ENCODE measurements at regions of chr9 and their contacts with region 1.

Region 1: DNA sequence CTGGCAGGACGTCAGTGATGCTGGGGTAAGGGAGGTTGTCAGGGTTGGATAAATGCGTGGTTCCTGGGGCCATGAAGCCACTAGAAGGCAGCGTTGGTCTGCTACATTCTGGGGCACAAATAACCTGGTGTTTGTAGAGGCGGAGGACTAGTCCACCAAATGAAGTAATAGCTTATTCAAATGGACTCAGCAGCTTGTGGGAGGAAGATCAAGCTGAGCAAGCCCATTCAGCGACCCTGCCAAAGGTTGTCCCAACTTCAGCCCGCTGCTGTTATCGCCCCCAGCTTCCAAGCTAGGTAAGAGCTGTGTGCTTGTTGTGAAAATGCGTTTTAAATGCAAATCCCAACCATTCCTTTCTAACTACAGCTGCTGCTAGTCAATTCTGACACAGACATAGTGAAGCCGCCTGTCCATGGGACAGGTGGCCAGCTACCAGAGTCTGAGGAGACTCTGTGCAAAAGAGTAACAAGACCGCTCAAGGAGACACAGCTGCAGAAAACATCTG is 7.6 kb upstream of the FAM240B start:
- DNase-seq: peak; percentile 82
- H3K4me3 Mint-ChIP-seq: no peak overlapping the region
- H3K27ac Mint-ChIP-seq: no peak overlapping the region
- H3K4me1 Mint-ChIP-seq: no peaks in the 10 kb centered on the region
- H3K27me3 Mint-ChIP-seq: no peaks in the 10 kb centered on the region
- CTCF ChIP-seq: peak; percentile 54

Region 2: GRCh38 chr9:38651400-38652042 is 76.0 kb before region 1 on chr9:
- CTCF ChIA-PET with region 1: no interaction called
- POLR2A ChIA-PET with region 1: no interaction called
- intact Hi-C with region 1: no loop called
- DNase-seq: no peak
- H3K4me3 Mint-ChIP-seq: no peak overlapping the region
- H3K27ac Mint-ChIP-seq: no peak overlapping the region
- H3K4me1 Mint-ChIP-seq: no peaks in the 10 kb centered on the region
- H3K27me3 Mint-ChIP-seq: peaks cover 13% of the 10 kb centered on the region
- CTCF ChIP-seq: no peak

Region 3: DNA sequence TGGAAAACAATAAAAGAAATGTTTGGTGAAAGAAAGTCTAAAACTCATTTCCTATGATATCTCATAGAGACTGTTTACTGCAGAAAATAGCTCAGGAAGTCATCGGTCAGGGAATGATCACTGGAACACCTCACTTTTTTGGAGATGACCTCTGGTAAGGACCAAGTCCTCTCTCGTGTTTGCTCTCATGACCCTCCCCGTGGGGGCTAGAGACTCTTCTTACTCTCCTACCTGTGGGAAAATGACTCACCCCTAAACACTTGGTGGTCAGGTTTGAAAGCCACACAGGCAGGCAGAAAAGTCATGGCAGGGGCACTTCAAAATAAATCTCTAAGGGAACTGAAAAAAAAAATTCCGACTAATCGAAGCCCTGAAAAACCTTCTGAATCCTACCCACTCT is 55.8 kb before region 1 on chr9:
- CTCF ChIA-PET with region 1: no interaction called
- POLR2A ChIA-PET with region 1: no interaction called
- intact Hi-C with region 1: no loop called
- DNase-seq: no peak
- H3K4me3 Mint-ChIP-seq: no peak overlapping the region
- H3K27ac Mint-ChIP-seq: no peak overlapping the region
- H3K4me1 Mint-ChIP-seq: no peaks in the 10 kb centered on the region
- H3K27me3 Mint-ChIP-seq: no peaks in the 10 kb centered on the region
- CTCF ChIP-seq: no peak

Region 4: GRCh38 chr9:38747067-38747466 is 19.5 kb after region 1 on chr9:
- CTCF ChIA-PET with region 1: interaction called, 14 read pairs
- POLR2A ChIA-PET with region 1: no interaction called
- intact Hi-C with region 1: no loop called
- DNase-seq: no peak
- H3K4me3 Mint-ChIP-seq: no peak overlapping the region
- H3K27ac Mint-ChIP-seq: no peak overlapping the region
- H3K4me1 Mint-ChIP-seq: no peaks in the 10 kb centered on the region
- H3K27me3 Mint-ChIP-seq: no peaks in the 10 kb centered on the region
- CTCF ChIP-seq: no peak